Activated T-helper 1 cell treated with anti-CD3 and anti-CD28 coated beads, Interleukin-12 subunit alpha, Interleukin-12 subunit beta, Interleukin-2, Interleukin-4 antibody, amounts not matched to agents 30 ng/mL and 10 ng/mL and 1 ng/mL, durations not matched to agents 14 hours and 24 hours and 36 hours (primary cell): ENCODE measurements at regions of chr18 and their contacts with region 1.

Region 1: GRCh38 chr18:830315-830901 is 18.4 kb upstream of the YES1 start:
- DNase-seq: peak; percentile 9
- H3K4me3 Mint-ChIP-seq: no peak overlapping the region
- H3K27ac Mint-ChIP-seq: peak overlapping the region; percentile 49
- H3K4me1 Mint-ChIP-seq: peaks cover 12% of the 10 kb centered on the region
- H3K27me3 Mint-ChIP-seq: peaks cover 4% of the 10 kb centered on the region

Region 2: DNA sequence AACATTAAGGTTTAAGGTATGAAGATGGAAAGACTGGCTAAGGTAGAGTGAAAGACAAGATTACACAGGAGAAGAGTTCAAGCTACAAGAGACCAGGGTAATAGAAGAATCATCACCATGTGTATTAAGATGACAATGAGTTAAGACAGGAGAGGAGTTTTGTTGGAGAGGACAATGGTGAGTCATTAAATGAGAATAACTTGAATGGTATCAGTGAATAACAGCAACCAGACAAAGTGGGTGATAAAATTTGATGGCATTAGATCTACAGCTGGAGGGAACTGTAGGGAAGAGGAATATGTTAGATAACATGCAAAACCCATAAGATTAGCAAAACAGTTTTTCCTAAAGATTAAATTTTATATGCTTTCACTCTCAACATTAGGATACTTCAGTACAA is 99.2 kb before region 1 on chr18:
- intact Hi-C with region 1: no loop called
- DNase-seq: no peak
- H3K4me3 Mint-ChIP-seq: no peak overlapping the region
- H3K27ac Mint-ChIP-seq: no peak overlapping the region
- H3K4me1 Mint-ChIP-seq: peaks cover 9% of the 10 kb centered on the region
- H3K27me3 Mint-ChIP-seq: no peaks in the 10 kb centered on the region

Region 3: GRCh38 chr18:741931-742512 is 88.4 kb before region 1 on chr18:
- intact Hi-C with region 1: loop called (anchors 1 kb)
- DNase-seq: no peak
- H3K4me3 Mint-ChIP-seq: no peak overlapping the region
- H3K27ac Mint-ChIP-seq: no peak overlapping the region
- H3K4me1 Mint-ChIP-seq: no peaks in the 10 kb centered on the region
- H3K27me3 Mint-ChIP-seq: no peaks in the 10 kb centered on the region

Region 4: DNA sequence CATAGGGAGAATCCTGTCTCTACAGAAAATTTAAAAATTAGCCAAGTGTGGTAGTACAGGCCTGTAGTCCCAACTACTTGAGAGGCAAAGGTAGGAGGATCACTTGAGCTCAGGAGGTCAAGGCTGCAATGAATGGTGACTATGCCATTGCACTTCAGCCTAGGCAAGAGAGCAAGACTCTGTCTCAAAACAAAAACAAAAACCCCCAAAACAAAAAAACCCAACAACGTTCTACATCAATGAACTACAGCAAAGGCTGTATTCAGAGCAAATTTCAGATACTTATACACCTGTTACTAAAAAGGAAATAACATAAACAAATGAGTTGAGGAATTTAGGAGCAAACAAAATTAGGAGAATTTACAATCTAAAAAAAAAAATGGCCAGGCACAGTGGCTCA is 41.0 kb before region 1 on chr18:
- intact Hi-C with region 1: loop called (anchors 2 kb)
- DNase-seq: no peak
- H3K4me3 Mint-ChIP-seq: no peak overlapping the region
- H3K27ac Mint-ChIP-seq: no peak overlapping the region
- H3K4me1 Mint-ChIP-seq: peaks cover 30% of the 10 kb centered on the region
- H3K27me3 Mint-ChIP-seq: no peaks in the 10 kb centered on the region